Mammary epithelial cell (primary cell): ENCODE measurements at regions of chr11 and their contacts with region 1.

Region 1: GRCh38 chr11:74726547-74727182 is 4.6 kb downstream of the CHRDL2 start:
- DNase-seq: peak; percentile 55
- H3K4me3 ChIP-seq: no peak overlapping the region
- H3K27ac ChIP-seq: no peak overlapping the region
- H3K4me1 ChIP-seq: no peaks in the 10 kb centered on the region
- H3K27me3 ChIP-seq: peaks cover 18% of the 10 kb centered on the region
- CTCF ChIP-seq: peak; percentile 83 to 99

Region 2: GRCh38 chr11:74449369-74449931 is 277.2 kb before region 1 on chr11:
- CTCF ChIA-PET with region 1: no interaction called
- dilution Hi-C with region 1: no loop called
- in situ Hi-C with region 1: no loop called
- intact Hi-C with region 1: loop called (anchors 10 kb)
- DNase-seq: peak; percentile 60
- H3K4me3 ChIP-seq: no peak overlapping the region
- H3K27ac ChIP-seq: no peak overlapping the region
- H3K4me1 ChIP-seq: no peaks in the 10 kb centered on the region
- H3K27me3 ChIP-seq: no peaks in the 10 kb centered on the region
- CTCF ChIP-seq: peak; percentile 67 to 74

Region 3: DNA sequence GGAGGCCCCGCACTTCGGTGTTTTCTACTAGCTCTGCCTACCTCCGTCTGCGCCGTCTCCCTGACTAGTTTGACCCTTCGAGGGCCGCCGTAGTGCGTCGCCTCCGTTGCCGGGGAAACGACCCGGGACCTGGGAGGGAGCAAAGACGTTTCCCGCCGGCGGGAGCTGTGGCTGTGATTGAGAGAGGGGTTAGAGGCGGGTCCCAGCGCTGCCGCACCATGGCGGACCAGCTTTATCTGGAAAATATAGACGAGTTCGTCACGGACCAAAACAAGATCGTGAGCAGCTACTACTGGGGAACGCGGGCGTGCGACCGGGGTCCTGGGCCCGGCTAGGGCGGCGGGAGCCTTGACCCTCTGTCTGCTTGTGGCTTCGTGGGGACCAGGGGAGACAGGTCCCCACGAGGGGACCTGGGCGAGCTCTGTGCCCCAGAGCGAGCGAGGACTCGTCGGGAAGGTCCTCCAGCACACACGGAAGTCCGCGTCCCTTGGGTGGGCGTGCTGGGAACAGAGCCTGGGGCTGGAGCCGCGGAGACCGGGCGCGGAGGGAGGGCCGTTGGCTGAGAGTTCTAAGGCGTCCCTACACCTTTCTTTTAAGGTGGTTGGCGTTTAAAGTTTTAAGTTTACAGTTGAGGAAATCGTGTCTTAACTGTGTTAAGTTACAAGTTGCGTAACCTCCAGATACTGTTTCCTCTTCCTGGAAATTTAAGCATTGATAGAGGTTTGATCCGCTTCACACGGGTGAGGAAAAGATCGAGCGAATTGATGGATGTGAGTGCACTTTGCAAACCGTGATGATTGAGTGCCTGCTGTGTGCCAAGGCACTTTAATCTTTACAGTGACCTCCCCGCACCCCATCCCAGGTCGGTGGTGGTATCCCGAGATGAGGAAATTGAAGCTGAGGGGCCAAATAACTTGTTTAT is 134.0 kb before region 1 on chr11 and contains the start of gene POLD3:
- CTCF ChIA-PET with region 1: no interaction called
- dilution Hi-C with region 1: no loop called
- in situ Hi-C with region 1: no loop called
- intact Hi-C with region 1: no loop called
- DNase-seq: peak; percentile 89
- H3K4me3 ChIP-seq: peak within 1 kb of the TSS; percentile 95 to 99 (median 99)
- H3K27ac ChIP-seq: peak within 1 kb of the TSS; percentile 95
- H3K4me1 ChIP-seq: peaks cover 20% of the 10 kb centered on the region
- H3K27me3 ChIP-seq: no peaks in the 10 kb centered on the region
- CTCF ChIP-seq: no peak
- total RNA-seq, gene POLD3: 11.0 to 26.8 TPM

Region 4: DNA sequence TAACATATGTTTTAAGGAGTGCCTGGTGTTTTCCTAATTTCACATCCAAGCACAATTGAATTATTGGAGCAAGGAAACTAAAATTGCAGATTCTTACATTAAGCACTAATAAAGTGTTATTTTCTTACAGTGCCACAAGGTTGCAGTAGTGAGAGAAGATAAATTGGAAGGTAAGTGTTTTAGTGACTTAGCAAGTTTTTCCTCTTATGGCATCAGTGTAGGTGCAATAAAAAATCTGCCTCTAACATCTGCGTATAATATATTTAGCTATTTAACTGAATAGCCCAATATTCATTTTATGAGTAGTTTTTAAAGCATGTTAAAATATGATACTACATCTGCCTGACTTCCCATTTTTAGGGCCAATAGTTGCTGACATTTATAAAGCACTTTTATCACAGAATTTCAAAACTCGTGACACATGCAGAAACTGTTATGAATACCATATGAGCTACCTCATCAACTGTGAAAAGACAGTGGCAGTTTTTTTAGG is 115.2 kb before region 1 on chr11:
- CTCF ChIA-PET with region 1: interaction called, 29 read pairs
- dilution Hi-C with region 1: no loop called
- in situ Hi-C with region 1: no loop called
- intact Hi-C with region 1: loop called (anchors 1 kb)
- DNase-seq: peak; percentile 22
- H3K4me3 ChIP-seq: no peak overlapping the region
- H3K27ac ChIP-seq: no peak overlapping the region
- H3K4me1 ChIP-seq: no peaks in the 10 kb centered on the region
- H3K27me3 ChIP-seq: no peaks in the 10 kb centered on the region
- CTCF ChIP-seq: peak; percentile 41 to 57

Region 5: GRCh38 chr11:74634537-74634936 is 92.1 kb before region 1 on chr11:
- CTCF ChIA-PET with region 1: interaction called, 5 read pairs
- dilution Hi-C with region 1: no loop called
- in situ Hi-C with region 1: loop called (anchors 5 to 10 kb)
- intact Hi-C with region 1: loop called (anchors 1 kb)
- DNase-seq: peak; percentile 93
- H3K4me3 ChIP-seq: no peak overlapping the region
- H3K27ac ChIP-seq: no peak overlapping the region
- H3K4me1 ChIP-seq: peaks cover 58% of the 10 kb centered on the region
- H3K27me3 ChIP-seq: no peaks in the 10 kb centered on the region
- CTCF ChIP-seq: peak; percentile 55 to 74

Region 6: GRCh38 chr11:74683279-74683871 is 43.3 kb before region 1 on chr11:
- CTCF ChIA-PET with region 1: no interaction called
- dilution Hi-C with region 1: loop called (anchors 5 kb)
- in situ Hi-C with region 1: no loop called
- intact Hi-C with region 1: no loop called
- DNase-seq: no peak
- H3K4me3 ChIP-seq: peak overlapping the region; percentile 7 to 28 (median 9)
- H3K27ac ChIP-seq: no peak overlapping the region
- H3K4me1 ChIP-seq: peaks cover 6% of the 10 kb centered on the region
- H3K27me3 ChIP-seq: no peaks in the 10 kb centered on the region
- CTCF ChIP-seq: peak; percentile 11 to 49

Region 7: GRCh38 chr11:74702383-74703007 is 24.2 kb before region 1 on chr11:
- CTCF ChIA-PET with region 1: interaction called, 8 read pairs
- dilution Hi-C with region 1: no loop called
- in situ Hi-C with region 1: no loop called
- intact Hi-C with region 1: loop called (anchors 2 kb)
- DNase-seq: peak; percentile 41
- H3K4me3 ChIP-seq: no peak overlapping the region
- H3K27ac ChIP-seq: no peak overlapping the region
- H3K4me1 ChIP-seq: no peaks in the 10 kb centered on the region
- H3K27me3 ChIP-seq: no peaks in the 10 kb centered on the region
- CTCF ChIP-seq: peak; percentile 98 to 99

Region 8: DNA sequence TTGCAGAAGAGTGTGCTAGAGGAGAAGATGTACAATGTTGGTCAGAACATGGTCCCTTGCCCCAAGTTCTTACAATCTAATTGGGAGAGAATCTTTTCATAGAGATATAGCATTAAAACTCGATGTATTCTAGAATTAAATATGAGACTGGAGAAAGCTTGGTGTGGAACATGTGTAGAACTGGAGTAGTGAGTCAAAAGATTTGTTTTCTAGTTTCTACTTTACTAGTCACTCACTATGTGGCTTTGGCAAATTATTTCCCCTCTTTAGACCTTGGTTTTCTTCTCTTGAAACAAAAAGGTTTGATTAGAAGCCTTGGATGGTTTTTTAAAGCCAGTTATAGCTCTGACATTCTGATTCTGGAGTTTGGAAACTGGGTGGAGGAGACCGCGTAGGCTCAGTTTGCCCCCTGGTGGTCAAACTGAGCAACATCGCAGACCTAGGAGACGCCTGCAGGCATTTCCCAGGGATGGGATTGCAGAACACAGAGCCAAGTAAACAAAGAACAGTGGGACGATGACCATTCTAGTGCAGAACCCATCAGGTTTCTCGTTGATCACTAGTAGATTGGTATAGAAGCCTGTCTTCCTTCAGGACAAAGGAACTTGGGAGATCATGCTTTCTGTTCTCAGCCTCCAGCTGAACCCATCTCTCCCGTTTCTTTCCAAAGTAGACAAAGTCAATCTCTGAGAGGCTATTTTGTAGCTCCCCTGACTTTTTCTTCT is 13.0 kb after region 1 on chr11:
- CTCF ChIA-PET with region 1: no interaction called
- dilution Hi-C with region 1: no loop called
- in situ Hi-C with region 1: no loop called
- intact Hi-C with region 1: no loop called
- DNase-seq: peak; percentile 60
- H3K4me3 ChIP-seq: no peak overlapping the region
- H3K27ac ChIP-seq: no peak overlapping the region
- H3K4me1 ChIP-seq: no peaks in the 10 kb centered on the region
- H3K27me3 ChIP-seq: peaks cover 5% of the 10 kb centered on the region
- CTCF ChIP-seq: peak; percentile 91 to 94

Region 9: GRCh38 chr11:75031771-75032549 is 305.3 kb after region 1 on chr11:
- CTCF ChIA-PET with region 1: no interaction called
- dilution Hi-C with region 1: no loop called
- in situ Hi-C with region 1: no loop called
- intact Hi-C with region 1: loop called (anchors 10 kb)
- DNase-seq: peak; percentile 51
- H3K4me3 ChIP-seq: no peak overlapping the region
- H3K27ac ChIP-seq: no peak overlapping the region
- H3K4me1 ChIP-seq: peaks cover 5% of the 10 kb centered on the region
- H3K27me3 ChIP-seq: no peaks in the 10 kb centered on the region
- CTCF ChIP-seq: peak; percentile 89 to 92